ENCODE measurements at regions of chr12 and their contacts with region 1.

Region 1: GRCh38 chr12:74415633-74416032 is 122.0 kb upstream of the ATXN7L3B start:
- DNase-seq: no peak
- H3K4me3 ChIP-seq: no peak overlapping the region
- H3K27ac ChIP-seq: no peak overlapping the region
- H3K4me1 ChIP-seq: no peaks in the 10 kb centered on the region
- H3K27me3 ChIP-seq: no peaks in the 10 kb centered on the region
- CTCF ChIP-seq: peak; percentile 62

Region 2: GRCh38 chr12:74537707-74538385 is 122.2 kb after region 1 on chr12 and contains the start of gene ATXN7L3B:
- CTCF ChIA-PET with region 1: no interaction called
- POLR2A ChIA-PET with region 1: no interaction called
- intact Hi-C with region 1: loop called (anchors 5 kb)
- DNase-seq: peak; percentile 88 to 92
- H3K4me3 ChIP-seq: peak within 1 kb of the TSS; percentile 87
- H3K27ac ChIP-seq: peak within 1 kb of the TSS; percentile 80
- H3K4me1 ChIP-seq: peaks cover 23% of the 10 kb centered on the region
- H3K27me3 ChIP-seq: no peaks in the 10 kb centered on the region
- CTCF ChIP-seq: no peak
- total RNA-seq, gene ATXN7L3B: 25.3 and 31.6 TPM in 2 replicates

Region 3: DNA sequence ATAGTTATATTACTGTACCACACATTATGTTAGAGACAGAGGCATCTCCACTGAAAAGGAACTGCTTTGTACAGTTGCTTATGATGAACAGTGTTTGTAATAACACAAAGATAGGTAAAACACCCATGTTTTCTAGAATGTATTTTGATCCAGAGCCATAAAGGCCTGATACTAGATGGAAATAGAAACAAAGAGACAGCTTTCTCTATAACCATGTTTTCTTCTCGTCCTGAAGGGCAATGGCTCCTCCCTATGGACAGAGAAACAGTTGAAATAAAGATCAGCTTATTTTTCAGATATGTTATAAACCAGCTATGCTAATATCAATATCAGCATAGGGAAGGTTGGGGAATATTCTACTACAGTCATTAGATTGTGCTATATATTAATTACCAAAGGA is 231.2 kb after region 1 on chr12:
- CTCF ChIA-PET with region 1: no interaction called
- POLR2A ChIA-PET with region 1: no interaction called
- intact Hi-C with region 1: loop called (anchors 5 kb)
- DNase-seq: peak in 1 of 2 experiments; percentile 38
- H3K4me3 ChIP-seq: no peak overlapping the region
- H3K27ac ChIP-seq: no peak overlapping the region
- H3K4me1 ChIP-seq: no peaks in the 10 kb centered on the region
- H3K27me3 ChIP-seq: no peaks in the 10 kb centered on the region
- CTCF ChIP-seq: peak; percentile 37; the same call in 1 of the 2 replicates

Region 4: DNA sequence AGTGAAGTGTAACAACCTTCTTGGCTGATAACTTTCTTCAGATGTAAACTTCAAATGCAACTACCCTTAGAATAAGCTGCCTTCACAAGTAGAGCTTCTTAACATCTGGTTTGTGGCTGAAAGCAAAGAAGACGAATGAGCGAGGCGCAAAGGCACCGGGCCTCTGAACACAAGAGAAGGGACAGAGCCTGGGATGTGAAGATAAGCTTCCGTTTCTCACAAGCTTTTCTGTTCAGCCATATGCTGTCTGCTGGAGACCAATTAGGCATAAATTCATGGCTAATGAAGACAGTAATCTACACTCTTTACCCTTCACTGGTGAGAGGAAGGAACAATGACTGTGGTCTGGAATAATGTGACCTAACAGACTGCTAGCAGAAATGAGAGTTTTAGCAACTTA is 317.2 kb after region 1 on chr12:
- CTCF ChIA-PET with region 1: no interaction called
- POLR2A ChIA-PET with region 1: no interaction called
- intact Hi-C with region 1: no loop called
- DNase-seq: no peak
- H3K4me3 ChIP-seq: no peak overlapping the region
- H3K27ac ChIP-seq: no peak overlapping the region
- H3K4me1 ChIP-seq: no peaks in the 10 kb centered on the region
- H3K27me3 ChIP-seq: no peaks in the 10 kb centered on the region
- CTCF ChIP-seq: no peak